ENCODE measurements at regions of chr14 and their contacts with region 1.

Region 1: GRCh38 chr14:61837336-61838229 is 75.4 kb downstream of the SNAPC1 start:
- DNase-seq: peak; percentile 84
- ATAC-seq: peak; percentile 96
- H3K4me3 Mint-ChIP-seq: no peak overlapping the region
- H3K27ac Mint-ChIP-seq: no peak overlapping the region
- H3K4me1 Mint-ChIP-seq: peaks cover 9% of the 10 kb centered on the region
- H3K27me3 Mint-ChIP-seq: peaks cover 25% of the 10 kb centered on the region

Region 2: GRCh38 chr14:61461808-61462275 is 375.7 kb before region 1 on chr14:
- CTCF ChIA-PET with region 1: interaction called, 39 read pairs
- POLR2A ChIA-PET with region 1: no interaction called
- DNase-seq: peak; percentile 62
- ATAC-seq: peak; percentile 55
- H3K4me3 Mint-ChIP-seq: peak overlapping the region; percentile 3
- H3K27ac Mint-ChIP-seq: peak overlapping the region; percentile 91
- H3K4me1 Mint-ChIP-seq: peaks cover 71% of the 10 kb centered on the region
- H3K27me3 Mint-ChIP-seq: no peaks in the 10 kb centered on the region

Region 3: DNA sequence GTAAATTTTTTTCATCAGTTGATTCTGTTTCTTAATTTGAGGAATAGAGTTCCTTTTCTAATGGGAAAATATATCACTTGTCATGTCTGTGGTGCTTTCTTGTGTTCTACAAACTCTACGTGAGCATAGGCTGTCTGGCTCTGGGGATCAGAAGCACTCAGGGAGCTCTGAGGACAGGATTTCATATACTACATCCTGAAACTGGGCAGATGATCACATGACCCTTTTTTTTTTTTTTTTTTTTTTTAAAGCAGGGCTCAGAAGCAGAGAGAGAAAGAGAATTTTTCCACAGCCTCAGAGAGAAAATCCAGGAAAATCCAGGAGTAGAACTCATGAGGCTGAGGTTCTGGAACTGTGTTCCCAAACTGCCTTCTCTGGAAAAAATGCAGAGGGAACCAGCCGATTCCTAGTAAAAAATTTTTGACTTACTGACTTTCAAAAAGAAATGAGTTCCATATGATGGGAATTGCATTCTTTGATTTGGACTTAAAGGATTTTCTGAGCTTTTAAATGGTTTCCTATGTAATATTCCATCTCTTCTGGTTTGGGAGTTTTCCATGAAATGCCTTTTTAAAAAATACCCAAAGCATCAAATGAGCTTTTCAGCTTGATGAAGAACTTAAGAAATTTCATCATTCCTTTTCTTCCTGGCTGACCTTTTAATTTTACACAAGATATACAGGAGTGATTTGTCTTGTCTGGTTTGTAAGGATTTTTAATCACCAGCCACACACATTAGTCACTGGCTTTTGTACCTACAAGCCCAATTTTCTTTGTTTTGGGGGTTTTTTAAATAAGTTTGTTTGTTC is 325.4 kb before region 1 on chr14:
- CTCF ChIA-PET with region 1: interaction called, 10 read pairs
- POLR2A ChIA-PET with region 1: no interaction called
- DNase-seq: no peak
- ATAC-seq: no peak
- H3K4me3 Mint-ChIP-seq: no peak overlapping the region
- H3K27ac Mint-ChIP-seq: peak overlapping the region; percentile 75
- H3K4me1 Mint-ChIP-seq: peaks cover 83% of the 10 kb centered on the region
- H3K27me3 Mint-ChIP-seq: no peaks in the 10 kb centered on the region

Region 4: GRCh38 chr14:61742371-61742770 is 95.2 kb before region 1 on chr14:
- CTCF ChIA-PET with region 1: interaction called, 27 read pairs
- POLR2A ChIA-PET with region 1: no interaction called
- DNase-seq: no peak
- ATAC-seq: no peak
- H3K4me3 Mint-ChIP-seq: no peak overlapping the region
- H3K27ac Mint-ChIP-seq: no peak overlapping the region
- H3K4me1 Mint-ChIP-seq: peaks cover 19% of the 10 kb centered on the region
- H3K27me3 Mint-ChIP-seq: no peaks in the 10 kb centered on the region

Region 5: GRCh38 chr14:61761959-61762786 is 75.4 kb before region 1 on chr14 and contains the start of gene SNAPC1:
- CTCF ChIA-PET with region 1: interaction called, 40 read pairs
- POLR2A ChIA-PET with region 1: interaction called, 3 read pairs
- DNase-seq: peak; percentile 99
- ATAC-seq: peak; percentile 98
- H3K4me3 Mint-ChIP-seq: peak within 1 kb of the TSS; percentile 87
- H3K27ac Mint-ChIP-seq: peak within 1 kb of the TSS; percentile 93
- H3K4me1 Mint-ChIP-seq: peaks cover 44% of the 10 kb centered on the region
- H3K27me3 Mint-ChIP-seq: peaks cover 4% of the 10 kb centered on the region
- total RNA-seq, gene SNAPC1: 6.4 to 6.5 TPM

Region 6: DNA sequence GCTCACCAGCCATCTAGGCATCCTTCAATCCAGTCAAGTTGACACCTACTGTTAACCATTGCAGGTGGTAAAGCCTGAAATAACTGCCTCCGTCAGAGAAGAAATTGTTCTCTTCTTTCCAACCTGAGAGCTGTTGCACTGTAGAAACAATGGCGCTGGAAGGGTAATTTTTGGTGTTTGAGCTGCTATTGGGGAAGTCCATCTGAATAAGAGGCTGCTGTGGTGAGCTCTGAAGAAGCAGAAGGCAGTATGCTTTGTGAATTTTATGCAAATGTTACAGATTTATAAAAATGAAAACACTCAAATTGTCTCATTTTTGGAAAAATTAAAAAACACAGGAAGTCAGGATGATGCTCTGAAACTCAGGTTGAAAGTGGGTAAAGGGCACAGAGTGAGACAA is 15.1 kb before region 1 on chr14:
- CTCF ChIA-PET with region 1: interaction called, 15 read pairs
- POLR2A ChIA-PET with region 1: no interaction called
- DNase-seq: no peak
- ATAC-seq: no peak
- H3K4me3 Mint-ChIP-seq: no peak overlapping the region
- H3K27ac Mint-ChIP-seq: no peak overlapping the region
- H3K4me1 Mint-ChIP-seq: no peaks in the 10 kb centered on the region
- H3K27me3 Mint-ChIP-seq: peaks cover 14% of the 10 kb centered on the region

Measured in activated CD8-positive, alpha-beta T cell treated with anti-CD3 and anti-CD28 coated beads, Interleukin-2, amount 10 ng/mL, durations not matched to agents 7 days and 5 days (primary cell).